Heart left ventricle (tissue), 16 donors: ENCODE measurements at regions of chr9 and their contacts with region 1.

Region 1: GRCh38 chr9:2181792-2182191 is 166.6 kb downstream of the SMARCA2 start:
- DNase-seq: peak in 1 of 5 donors; percentile 26
- ATAC-seq: peak in 2 of 4 donors; percentile 49 to 52
- H3K4me3 ChIP-seq: no peak overlapping the region
- H3K27ac ChIP-seq: no peak overlapping the region
- H3K4me1 ChIP-seq: peaks cover 0 to 10% (median 0%) of the 10 kb centered on the region in 12 donors
- H3K27me3 ChIP-seq: no peaks in the 10 kb centered on the region
- CTCF ChIP-seq: peak; percentile 17 to 56 (median 40)
- POLR2A ChIP-seq: no peak

Region 2: GRCh38 chr9:1759009-1759408 is 422.8 kb before region 1 on chr9:
- intact Hi-C with region 1: no loop called
- DNase-seq: no peak
- ATAC-seq: peak in 2 of 4 donors; percentile 29 to 51
- H3K4me3 ChIP-seq: no peak overlapping the region
- H3K27ac ChIP-seq: no peak overlapping the region
- H3K4me1 ChIP-seq: no peaks in the 10 kb centered on the region
- H3K27me3 ChIP-seq: no peaks in the 10 kb centered on the region
- CTCF ChIP-seq: no peak
- POLR2A ChIP-seq: no peak

Region 3: GRCh38 chr9:2125906-2126305 is 55.9 kb before region 1 on chr9:
- intact Hi-C with region 1: loop called in 6 of 10 experiments (anchors 5 to 10 kb)
- DNase-seq: no peak
- ATAC-seq: peak in 2 of 4 donors; percentile 50 to 72
- H3K4me3 ChIP-seq: peak overlapping the region in 9 of 12 donors; percentile 8 to 36 (median 25)
- H3K27ac ChIP-seq: peak overlapping the region in 11 of 12 donors; percentile 48 to 85 (median 60)
- H3K4me1 ChIP-seq: peaks cover 2 to 75% (median 56%) of the 10 kb centered on the region in 12 donors
- H3K27me3 ChIP-seq: no peaks in the 10 kb centered on the region
- CTCF ChIP-seq: no peak
- POLR2A ChIP-seq: no peak

Region 4: GRCh38 chr9:2243666-2244555 is 62.1 kb after region 1 on chr9:
- intact Hi-C with region 1: no loop called
- DNase-seq: no peak
- ATAC-seq: no peak
- H3K4me3 ChIP-seq: no peak overlapping the region
- H3K27ac ChIP-seq: no peak overlapping the region
- H3K4me1 ChIP-seq: peaks cover 0 to 20% (median 6%) of the 10 kb centered on the region in 12 donors
- H3K27me3 ChIP-seq: no peaks in the 10 kb centered on the region
- CTCF ChIP-seq: no peak
- POLR2A ChIP-seq: no peak